ENCODE measurements at regions of chr17 and their contacts with region 1.

Region 1: GRCh38 chr17:73255671-73256181 is 6.0 kb downstream of the CPSF4L start:
- DNase-seq: peak; percentile 78
- CTCF ChIP-seq: peak; percentile 96

Region 2: GRCh38 chr17:73210002-73210678 is 45.6 kb before region 1 on chr17:
- in situ Hi-C with region 1: no loop called
- DNase-seq: no peak
- CTCF ChIP-seq: no peak

Region 3: GRCh38 chr17:73325527-73325842 is 69.8 kb after region 1 on chr17:
- in situ Hi-C with region 1: no loop called
- DNase-seq: no peak
- CTCF ChIP-seq: no peak

Region 4: DNA sequence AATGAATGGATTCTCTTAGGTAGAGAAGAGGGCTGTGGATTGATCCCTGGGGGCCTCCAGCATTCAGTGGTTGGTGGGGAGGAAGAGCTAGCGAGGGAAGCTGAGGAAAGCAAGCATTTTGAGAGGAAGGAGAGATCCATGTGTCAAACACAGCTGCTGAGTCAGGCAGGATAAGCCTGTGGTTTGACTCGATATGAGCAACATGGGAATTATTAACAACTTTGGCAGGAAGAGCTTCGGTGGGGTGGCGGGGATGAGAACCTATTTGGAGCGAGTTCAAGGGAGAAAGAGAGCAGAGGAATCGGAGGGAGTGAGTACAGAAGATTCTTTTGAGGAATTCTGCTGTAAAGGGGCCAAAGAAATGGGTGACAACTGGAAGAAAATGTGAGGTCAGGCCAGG is 115.6 kb after region 1 on chr17:
- in situ Hi-C with region 1: loop called (anchors 5 kb)
- DNase-seq: no peak
- CTCF ChIP-seq: no peak

Measured in GM13976 (cell line).